GM23248 (cell line): ENCODE measurements at regions of chr2 and their contacts with region 1.

Region 1: DNA sequence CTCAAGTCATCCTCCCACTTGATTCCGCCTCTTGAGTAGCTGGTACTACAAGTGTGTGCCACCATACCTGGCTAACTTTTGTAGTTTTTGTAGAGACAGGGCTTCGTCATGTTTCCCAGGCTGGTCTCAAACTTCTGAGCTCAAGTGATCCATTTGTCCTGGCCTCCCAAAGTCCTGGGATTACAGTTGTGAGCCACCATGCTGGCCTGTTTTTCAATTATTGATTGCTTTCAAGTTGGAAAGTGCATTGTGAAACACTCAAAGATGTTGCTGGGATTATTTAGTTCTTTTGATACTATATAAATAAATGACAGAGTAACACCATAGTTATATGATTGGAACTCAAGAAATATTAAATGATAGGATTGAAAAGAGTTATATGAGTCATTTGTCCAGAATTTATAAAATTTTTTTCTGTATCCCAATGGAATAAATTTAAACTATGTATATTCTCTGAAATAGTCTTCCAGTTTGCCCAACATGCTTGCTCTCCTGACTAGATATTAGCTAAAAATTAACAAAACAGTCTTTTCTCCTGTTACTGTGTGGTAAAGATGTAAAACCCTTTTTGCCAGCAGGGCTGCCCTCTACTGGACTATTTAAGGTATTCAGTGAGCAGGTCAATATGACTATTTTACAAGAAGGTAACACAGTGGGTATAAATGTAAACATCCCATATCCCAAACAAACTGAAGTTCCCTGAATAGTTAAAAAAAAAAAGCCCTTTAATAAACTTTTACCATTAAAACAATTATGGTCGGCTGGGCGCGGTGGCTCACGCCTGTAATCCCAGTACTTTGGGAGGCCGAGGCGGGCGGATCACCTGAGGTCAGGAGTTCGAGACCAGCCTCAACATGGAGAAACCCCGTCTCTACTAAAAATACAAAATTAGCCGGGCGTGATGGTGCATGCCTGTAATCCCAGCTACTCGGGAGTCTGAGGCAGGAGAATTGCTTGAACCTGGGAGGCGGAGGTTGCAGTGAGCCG is 42.7 kb downstream of the ACSL3 start:
- DNase-seq: peak; percentile 76
- H3K4me3 ChIP-seq: no peak overlapping the region
- H3K27ac ChIP-seq: peak overlapping the region; percentile 73
- H3K4me1 ChIP-seq: peaks cover 36% of the 10 kb centered on the region
- H3K27me3 ChIP-seq: no peaks in the 10 kb centered on the region

Region 2: GRCh38 chr2:222504719-222505118 is 398.8 kb before region 1 on chr2:
- in situ Hi-C with region 1: no loop called
- DNase-seq: no peak
- H3K4me3 ChIP-seq: no peak overlapping the region
- H3K27ac ChIP-seq: no peak overlapping the region
- H3K4me1 ChIP-seq: no peaks in the 10 kb centered on the region
- H3K27me3 ChIP-seq: no peaks in the 10 kb centered on the region; the same call in none of the 2 replicates

Region 3: GRCh38 chr2:222690564-222691200 is 212.8 kb before region 1 on chr2:
- in situ Hi-C with region 1: loop called (anchors 10 kb)
- DNase-seq: peak; percentile 86
- H3K4me3 ChIP-seq: no peak overlapping the region
- H3K27ac ChIP-seq: no peak overlapping the region
- H3K4me1 ChIP-seq: no peaks in the 10 kb centered on the region
- H3K27me3 ChIP-seq: no peaks in the 10 kb centered on the region

Region 4: DNA sequence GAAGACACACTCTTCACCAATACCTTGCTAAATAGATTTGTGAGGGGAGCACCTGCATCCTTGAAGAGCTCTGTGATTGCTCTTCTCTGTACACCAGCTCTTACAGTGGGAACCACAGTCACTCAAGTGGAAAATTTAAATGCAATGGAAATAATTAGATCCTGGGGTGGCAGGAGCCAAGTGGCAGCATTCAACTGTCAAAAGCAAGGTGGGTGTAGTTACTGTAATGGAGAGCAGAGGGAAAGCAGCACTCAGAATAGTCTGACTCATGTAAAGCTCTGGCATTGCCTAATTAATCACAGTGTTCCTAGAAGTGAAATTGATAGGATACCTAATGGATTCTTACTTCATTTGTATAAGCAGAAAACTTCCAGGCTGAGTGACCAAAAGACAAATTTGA is 394.3 kb after region 1 on chr2:
- in situ Hi-C with region 1: no loop called
- DNase-seq: peak; percentile 20
- H3K4me3 ChIP-seq: no peak overlapping the region
- H3K27ac ChIP-seq: no peak overlapping the region
- H3K4me1 ChIP-seq: no peaks in the 10 kb centered on the region
- H3K27me3 ChIP-seq: 0 out of 2 replicates have a peak, but pooled peaks cover 3% of the 10 kb centered on the region